ENCODE measurements at regions of chr6 and their contacts with region 1.

Region 1: DNA sequence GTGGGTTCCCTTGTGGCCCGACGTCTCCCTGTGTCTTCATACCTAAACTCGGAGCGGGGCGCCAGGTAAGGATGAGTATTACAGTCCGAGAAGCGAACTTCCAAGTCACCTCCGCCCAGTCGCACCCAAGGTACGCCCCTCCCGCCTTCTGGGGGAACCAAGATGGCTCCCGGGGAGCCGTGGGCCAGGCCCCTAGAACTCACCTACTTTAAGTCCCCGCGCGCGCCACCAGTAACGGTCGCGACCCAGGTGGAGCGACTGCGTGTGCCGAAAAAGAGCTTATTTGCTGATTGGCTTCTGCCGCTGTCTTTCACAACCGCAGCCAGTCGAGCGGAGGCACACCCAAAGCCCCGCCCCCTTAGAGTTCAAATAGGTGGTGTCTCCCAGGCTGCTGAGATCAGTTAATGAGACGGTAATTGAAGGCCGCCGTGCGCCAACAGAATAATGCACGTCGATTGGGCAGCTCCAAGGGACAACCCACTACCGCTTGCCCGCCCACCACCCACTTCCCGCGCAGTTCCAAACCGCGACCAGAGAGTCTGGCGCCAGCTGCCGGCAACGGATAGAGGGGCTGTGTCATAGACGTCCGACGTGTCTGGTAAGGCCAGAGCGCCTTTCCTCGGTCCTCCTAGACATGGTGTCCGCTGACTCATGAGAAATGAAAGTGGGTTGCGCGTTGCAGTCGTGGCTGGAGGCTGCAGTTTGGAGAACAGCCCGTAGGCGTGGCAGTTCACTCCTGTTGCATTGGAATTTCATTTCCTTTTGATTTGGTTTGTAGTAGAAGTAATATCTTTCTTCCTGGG is at the start of gene MDC1:
- DNase-seq: peak; percentile 91
- ATAC-seq: peak; percentile 73
- H3K4me3 Mint-ChIP-seq: peak within 1 kb of the TSS; percentile 99
- H3K27ac Mint-ChIP-seq: peak within 1 kb of the TSS; percentile 99
- H3K4me1 Mint-ChIP-seq: peaks cover 57% of the 10 kb centered on the region
- H3K27me3 Mint-ChIP-seq: no peaks in the 10 kb centered on the region
- CTCF ChIP-seq: no peak
- total RNA-seq, gene MDC1: 62.4 and 65.6 TPM in 2 replicates

Region 2: DNA sequence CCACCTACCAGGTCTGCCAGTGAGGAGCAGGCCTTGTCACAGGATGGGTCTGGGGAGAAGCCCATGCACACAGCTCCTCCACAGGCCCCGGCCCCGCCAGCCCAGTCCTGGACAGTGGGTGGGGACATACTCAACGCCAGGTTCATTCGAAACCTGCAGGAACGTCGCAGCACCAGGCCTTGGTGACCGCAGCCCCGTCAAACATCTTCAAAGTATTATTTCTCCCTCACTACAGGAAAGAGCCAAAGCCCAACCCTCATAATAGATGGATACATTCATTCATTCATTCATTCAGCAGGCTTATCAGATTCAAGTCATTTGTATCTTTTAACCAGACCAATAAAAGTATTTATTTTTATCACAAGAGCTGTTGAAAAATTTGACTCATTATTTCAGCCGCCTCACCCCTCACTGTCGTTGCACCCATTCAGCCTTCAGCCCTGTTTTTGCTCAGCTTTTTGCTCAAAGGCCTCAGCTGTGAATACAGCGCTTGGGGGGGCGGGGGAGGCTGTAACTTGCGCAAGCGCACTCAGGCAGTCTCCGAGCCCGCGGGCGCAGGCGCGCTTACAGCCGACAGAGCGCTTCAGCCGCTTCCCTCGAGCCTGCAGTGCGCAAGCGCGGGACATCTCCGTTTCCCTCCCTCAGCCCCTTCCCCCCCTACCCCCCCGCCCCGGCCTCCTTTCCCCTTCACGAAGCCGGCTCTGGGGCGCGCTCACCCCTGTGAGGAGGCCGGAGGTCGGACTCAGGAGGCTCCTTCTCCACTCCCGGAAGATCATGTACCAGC is 70.6 kb before region 1 on chr6 and contains the start of gene C6orf136:
- CTCF ChIA-PET with region 1: interaction called, 4 read pairs
- POLR2A ChIA-PET with region 1: interaction called, 3 read pairs
- intact Hi-C with region 1: loop called (anchors 1 kb)
- DNase-seq: peak; percentile 82
- ATAC-seq: peak; percentile 78
- H3K4me3 Mint-ChIP-seq: peak within 1 kb of the TSS; percentile 91
- H3K27ac Mint-ChIP-seq: peak within 1 kb of the TSS; percentile 90
- H3K4me1 Mint-ChIP-seq: peaks cover 35% of the 10 kb centered on the region
- H3K27me3 Mint-ChIP-seq: no peaks in the 10 kb centered on the region
- CTCF ChIP-seq: no peak
- total RNA-seq, gene C6orf136: 21.6 and 35.6 TPM in 2 replicates

Region 3: DNA sequence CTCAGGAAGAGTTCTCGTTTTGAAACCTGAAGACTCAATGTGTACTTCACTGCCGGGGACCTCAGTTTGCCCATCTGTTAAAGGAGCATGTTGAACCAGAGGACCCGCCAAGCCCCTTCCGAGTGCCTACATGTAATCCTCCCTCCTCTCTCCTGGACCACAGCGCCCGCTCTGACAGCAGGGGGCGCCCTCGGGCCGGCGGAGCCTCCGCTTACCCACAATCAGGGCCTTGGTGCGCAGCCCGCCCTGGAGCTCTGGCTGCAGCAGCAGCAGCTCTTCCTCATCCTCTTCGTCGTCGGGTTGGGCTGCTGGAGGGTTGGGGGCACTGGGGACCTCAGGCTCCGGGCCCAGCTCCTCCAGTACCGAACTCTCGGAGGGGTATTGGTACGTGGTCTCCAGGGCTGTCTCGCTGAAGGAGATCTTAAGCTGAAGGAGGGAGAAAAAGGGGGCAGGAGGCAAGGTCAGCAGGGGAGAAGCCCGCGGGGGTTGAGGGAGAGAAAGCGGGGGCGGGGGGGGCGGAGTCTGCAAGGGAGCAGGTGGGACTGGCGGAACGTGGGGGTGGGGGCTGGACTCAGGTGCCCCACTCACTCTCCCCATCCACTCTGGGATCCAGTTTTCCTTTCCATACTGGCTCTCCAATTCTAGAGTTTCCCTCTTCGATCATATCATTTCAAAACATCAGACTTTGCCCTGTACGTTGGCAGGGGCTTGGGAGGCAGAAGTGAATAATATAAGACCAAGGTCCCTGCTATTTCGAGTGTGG is 38.1 kb before region 1 on chr6:
- CTCF ChIA-PET with region 1: interaction called, 576 read pairs
- POLR2A ChIA-PET with region 1: interaction called, 697 read pairs
- intact Hi-C with region 1: loop called (anchors 1 kb)
- DNase-seq: peak; percentile 94
- ATAC-seq: peak; percentile 33
- H3K4me3 Mint-ChIP-seq: peak overlapping the region; percentile 92
- H3K27ac Mint-ChIP-seq: peak overlapping the region; percentile 99
- H3K4me1 Mint-ChIP-seq: peaks cover 62% of the 10 kb centered on the region
- H3K27me3 Mint-ChIP-seq: no peaks in the 10 kb centered on the region
- CTCF ChIP-seq: peak; percentile 73

Region 4: DNA sequence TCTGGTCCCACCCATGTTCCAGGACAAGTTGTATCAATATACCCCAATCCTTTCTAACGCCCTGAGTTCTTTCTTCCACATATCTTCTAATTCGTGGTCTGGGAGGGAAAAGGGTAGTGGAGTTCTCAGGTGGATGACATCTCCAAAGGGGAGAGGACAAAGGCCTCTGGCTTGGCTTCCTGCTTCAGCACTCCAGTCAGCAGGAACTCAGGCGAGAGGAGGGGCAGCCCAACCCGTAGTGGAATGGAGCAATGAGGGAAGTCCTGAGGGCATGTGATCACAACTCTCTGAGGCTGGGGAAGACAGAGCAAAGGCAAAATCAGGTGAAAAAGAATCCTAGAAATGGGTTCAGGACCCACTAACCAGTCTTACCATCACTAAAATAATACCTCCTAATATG is 16.9 kb before region 1 on chr6:
- CTCF ChIA-PET with region 1: no interaction called
- POLR2A ChIA-PET with region 1: interaction called, 15 read pairs
- intact Hi-C with region 1: no loop called
- DNase-seq: no peak
- ATAC-seq: no peak
- H3K4me3 Mint-ChIP-seq: no peak overlapping the region
- H3K27ac Mint-ChIP-seq: no peak overlapping the region
- H3K4me1 Mint-ChIP-seq: no peaks in the 10 kb centered on the region
- H3K27me3 Mint-ChIP-seq: no peaks in the 10 kb centered on the region
- CTCF ChIP-seq: no peak

Region 5: GRCh38 chr6:30742316-30743098 is 25.3 kb after region 1 on chr6 and contains the start of gene FLOT1:
- CTCF ChIA-PET with region 1: interaction called, 4 read pairs
- POLR2A ChIA-PET with region 1: interaction called, 6 read pairs
- intact Hi-C with region 1: loop called (anchors 2 kb)
- DNase-seq: peak; percentile 89
- ATAC-seq: peak; percentile 88
- H3K4me3 Mint-ChIP-seq: peak within 1 kb of the TSS; percentile 89
- H3K27ac Mint-ChIP-seq: peak within 1 kb of the TSS; percentile 64
- H3K4me1 Mint-ChIP-seq: peaks cover 33% of the 10 kb centered on the region
- H3K27me3 Mint-ChIP-seq: no peaks in the 10 kb centered on the region
- CTCF ChIP-seq: no peak
- total RNA-seq, gene FLOT1: 49.1 and 52.0 TPM in 2 replicates

Measured in activated B cell treated with CpG ODN at 0.5 μM for 24 hours (primary cell).